Ovary (tissue), 10 donors: ENCODE measurements at regions of chr1 and their contacts with region 1.

Region 1: GRCh38 chr1:12658531-12659453 is 14.9 kb downstream of the AADACL4 start:
- DNase-seq: peak; percentile 65 to 79 (median 75)
- H3K4me3 ChIP-seq: no peak overlapping the region
- H3K27ac ChIP-seq: no peak overlapping the region
- H3K4me1 ChIP-seq: no peaks in the 10 kb centered on the region
- H3K27me3 ChIP-seq: no peaks in the 10 kb centered on the region
- CTCF ChIP-seq: peak; percentile 78 to 93 (median 90)
- EP300 ChIP-seq: no peak
- POLR2A ChIP-seq: no peak

Region 2: GRCh38 chr1:12124693-12125421 is 533.9 kb before region 1 on chr1:
- intact Hi-C with region 1: loop called in 1 of 4 experiments (anchors 10 kb)
- DNase-seq: peak; percentile 80 to 87 (median 84)
- H3K4me3 ChIP-seq: no peak overlapping the region
- H3K27ac ChIP-seq: no peak overlapping the region
- H3K4me1 ChIP-seq: peaks cover 4% of the 10 kb centered on the region
- H3K27me3 ChIP-seq: no peaks in the 10 kb centered on the region
- CTCF ChIP-seq: peak; percentile 75 to 97 (median 93)
- EP300 ChIP-seq: no peak
- POLR2A ChIP-seq: no peak

Region 3: DNA sequence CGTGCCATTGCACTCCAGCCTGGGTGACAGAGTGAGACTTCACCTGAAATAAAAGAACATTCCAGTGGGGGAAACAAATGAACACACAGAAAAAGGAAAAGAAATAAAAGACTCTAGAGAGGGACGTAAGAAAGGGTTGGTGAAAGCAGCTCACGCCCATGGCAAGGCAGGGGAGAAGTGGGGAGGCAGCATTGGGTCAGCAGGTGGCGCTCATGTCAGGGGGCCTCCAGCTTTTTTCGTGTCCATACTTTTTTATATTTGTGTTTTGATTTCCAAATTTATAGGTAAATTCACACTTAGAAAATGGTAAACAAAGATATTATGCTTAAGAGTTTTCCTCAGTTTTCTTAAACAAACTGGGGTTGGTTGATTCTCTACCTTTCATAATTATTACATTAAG is 383.4 kb before region 1 on chr1:
- intact Hi-C with region 1: loop called in 2 of 4 experiments (anchors 5 kb)
- DNase-seq: peak; percentile 38 to 75 (median 62)
- H3K4me3 ChIP-seq: no peak overlapping the region
- H3K27ac ChIP-seq: no peak overlapping the region
- H3K4me1 ChIP-seq: no peaks in the 10 kb centered on the region
- H3K27me3 ChIP-seq: no peaks in the 10 kb centered on the region
- CTCF ChIP-seq: peak in 2 of 3 donors; percentile 37 to 60
- EP300 ChIP-seq: no peak
- POLR2A ChIP-seq: no peak

Region 4: DNA sequence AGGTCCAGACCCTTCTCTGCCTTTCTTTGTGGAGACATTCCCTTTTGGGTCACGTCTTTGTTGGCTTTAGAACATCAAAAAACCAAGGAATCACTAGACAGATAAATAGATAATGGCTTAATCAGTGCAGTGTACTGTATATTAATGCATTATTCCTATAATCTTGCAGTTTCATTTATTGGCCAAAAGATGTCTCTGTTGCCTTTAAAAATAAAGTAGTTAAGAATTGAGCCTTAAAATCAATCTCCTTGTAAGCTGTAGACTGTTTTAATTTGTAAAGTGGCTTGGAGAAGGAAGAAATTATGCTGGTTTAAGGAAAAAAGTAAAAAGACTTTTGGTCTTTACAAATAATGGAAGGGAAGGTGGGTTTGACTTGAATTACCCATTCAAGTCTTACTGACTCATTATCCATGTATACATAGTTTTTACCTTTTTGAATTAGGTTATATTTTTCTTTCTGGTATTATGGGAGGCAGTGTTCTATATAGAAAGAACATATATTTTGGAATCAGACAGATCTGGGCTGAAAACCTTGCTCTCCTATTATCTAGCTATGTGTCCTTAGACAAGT is 344.4 kb before region 1 on chr1:
- intact Hi-C with region 1: loop called in 2 of 4 experiments (anchors 5 kb)
- DNase-seq: no peak
- H3K4me3 ChIP-seq: no peak overlapping the region
- H3K27ac ChIP-seq: no peak overlapping the region
- H3K4me1 ChIP-seq: peaks cover 1% of the 10 kb centered on the region
- H3K27me3 ChIP-seq: no peaks in the 10 kb centered on the region
- CTCF ChIP-seq: no peak
- EP300 ChIP-seq: no peak
- POLR2A ChIP-seq: no peak

Region 5: GRCh38 chr1:12636098-12636950 is 22.5 kb before region 1 on chr1:
- intact Hi-C with region 1: loop called in 1 of 4 experiments (anchors 2 kb)
- DNase-seq: peak in 3 of 5 donors; percentile 36 to 62 (median 43)
- H3K4me3 ChIP-seq: no peak overlapping the region
- H3K27ac ChIP-seq: no peak overlapping the region
- H3K4me1 ChIP-seq: peaks cover 8% of the 10 kb centered on the region
- H3K27me3 ChIP-seq: no peaks in the 10 kb centered on the region
- CTCF ChIP-seq: no peak
- EP300 ChIP-seq: no peak
- POLR2A ChIP-seq: no peak